BJ (cell line): ENCODE measurements at regions of chr19 and their contacts with region 1.

Region 1: DNA sequence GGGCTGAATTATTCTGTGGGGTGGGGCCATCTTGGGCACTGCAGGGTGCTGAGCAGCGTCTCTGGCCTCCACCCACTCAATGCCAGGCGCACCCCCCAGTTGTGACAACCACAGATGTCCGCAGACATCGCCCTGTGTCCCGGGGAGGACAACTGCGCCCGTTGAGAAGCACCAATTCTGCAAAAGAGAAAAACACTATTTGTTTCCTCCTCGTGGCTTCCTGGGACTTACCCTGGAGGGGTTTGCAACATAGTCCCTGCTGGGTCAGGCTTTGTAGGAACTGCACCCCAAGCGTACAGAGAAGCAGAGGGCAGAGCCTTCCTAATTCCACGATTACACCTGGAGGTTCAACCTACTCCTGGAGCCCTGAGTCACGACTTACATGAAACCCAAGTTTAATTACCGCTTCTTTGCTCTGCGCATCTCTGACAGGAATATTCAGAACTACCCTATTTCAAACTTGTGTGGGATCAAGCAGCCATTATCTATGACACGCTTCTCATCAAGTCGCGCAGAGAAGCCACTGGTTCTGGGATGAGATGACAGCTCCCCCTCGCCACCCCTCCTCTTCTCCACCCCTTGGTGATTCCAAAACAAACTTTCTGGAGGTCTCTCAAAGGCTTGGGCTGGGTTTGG is 11.1 kb upstream of the SLC39A3 start:
- DNase-seq: no peak
- H3K4me3 ChIP-seq: no peak overlapping the region
- H3K27me3 ChIP-seq: no peaks in the 10 kb centered on the region
- CTCF ChIP-seq: no peak

Region 2: GRCh38 chr19:2636897-2637683 is 113.8 kb before region 1 on chr19:
- CTCF ChIA-PET with region 1: interaction called, 10 read pairs
- POLR2A ChIA-PET with region 1: no interaction called
- DNase-seq: no peak
- H3K4me3 ChIP-seq: no peak overlapping the region
- H3K27me3 ChIP-seq: peaks cover 2% of the 10 kb centered on the region; the same call in 1 of the 2 replicates
- CTCF ChIP-seq: peak; percentile 96

Region 3: GRCh38 chr19:2661615-2662014 is 89.3 kb before region 1 on chr19:
- CTCF ChIA-PET with region 1: interaction called, 16 read pairs
- POLR2A ChIA-PET with region 1: no interaction called
- DNase-seq: no peak
- H3K4me3 ChIP-seq: no peak overlapping the region
- H3K27me3 ChIP-seq: peaks cover 1% of the 10 kb centered on the region; the same call in 1 of the 2 replicates
- CTCF ChIP-seq: no peak

Region 4: DNA sequence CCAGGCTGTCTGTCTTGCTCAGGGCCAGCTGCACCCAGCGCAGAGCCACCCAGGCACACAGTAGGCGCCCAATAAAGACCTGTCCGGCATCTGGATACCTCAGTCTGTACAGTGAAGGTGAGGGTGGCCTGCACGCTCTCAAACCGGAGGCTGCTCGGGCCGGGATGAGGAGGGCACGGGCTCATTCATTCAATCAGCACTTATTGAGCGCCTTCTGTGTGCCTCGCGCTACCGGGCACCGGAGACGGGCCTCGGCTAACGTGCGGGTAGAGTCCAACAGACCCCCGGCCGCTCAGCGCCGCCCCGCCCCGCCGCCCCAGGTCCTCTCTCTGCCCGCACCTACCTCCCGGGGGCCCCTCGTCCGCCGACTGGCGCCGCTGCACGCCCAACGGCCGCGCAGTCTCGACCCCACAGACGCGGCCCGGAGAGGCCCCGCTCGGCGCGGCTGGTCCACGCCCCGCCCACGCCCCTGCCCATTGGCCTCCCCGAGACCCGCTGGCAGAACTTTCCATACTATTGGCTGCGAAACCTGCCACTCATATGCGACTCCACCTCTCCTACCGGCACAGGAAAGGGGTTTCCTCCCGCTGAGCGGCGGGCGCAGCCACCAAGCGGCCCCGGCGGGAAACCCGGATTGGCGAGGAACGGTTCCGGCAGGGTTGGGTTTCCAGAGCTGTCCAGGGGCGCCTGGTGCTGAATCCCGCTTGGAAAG is 11.2 kb before region 1 on chr19 and contains the start of gene SLC39A3:
- CTCF ChIA-PET with region 1: interaction called, 14 read pairs
- POLR2A ChIA-PET with region 1: no interaction called
- DNase-seq: peak; percentile 76
- H3K4me3 ChIP-seq: peak within 1 kb of the TSS; percentile 88
- H3K27me3 ChIP-seq: no peaks in the 10 kb centered on the region
- CTCF ChIP-seq: peak; percentile 34
- polyA plus RNA-seq, gene SLC39A3: 51.7 and 67.9 TPM in 2 replicates

Region 5: GRCh38 chr19:2770055-2771013 is 19.4 kb after region 1 on chr19:
- CTCF ChIA-PET with region 1: interaction called, 13 read pairs
- POLR2A ChIA-PET with region 1: no interaction called
- DNase-seq: no peak
- H3K4me3 ChIP-seq: no peak overlapping the region
- H3K27me3 ChIP-seq: no peaks in the 10 kb centered on the region
- CTCF ChIP-seq: no peak

Region 6: GRCh38 chr19:2977001-2977685 is 226.2 kb after region 1 on chr19 and contains the start of gene TLE6:
- CTCF ChIA-PET with region 1: no interaction called
- POLR2A ChIA-PET with region 1: no interaction called
- DNase-seq: peak; percentile 39
- H3K4me3 ChIP-seq: peak within 1 kb of the TSS; percentile 42
- H3K27me3 ChIP-seq: peaks cover 4% of the 10 kb centered on the region; the same call in 1 of the 2 replicates
- CTCF ChIP-seq: no peak
- polyA plus RNA-seq, gene TLE6: 0.12 and 0.26 TPM in 2 replicates